ENCODE measurements at regions of chr5 and their contacts with region 1.

Region 1: DNA sequence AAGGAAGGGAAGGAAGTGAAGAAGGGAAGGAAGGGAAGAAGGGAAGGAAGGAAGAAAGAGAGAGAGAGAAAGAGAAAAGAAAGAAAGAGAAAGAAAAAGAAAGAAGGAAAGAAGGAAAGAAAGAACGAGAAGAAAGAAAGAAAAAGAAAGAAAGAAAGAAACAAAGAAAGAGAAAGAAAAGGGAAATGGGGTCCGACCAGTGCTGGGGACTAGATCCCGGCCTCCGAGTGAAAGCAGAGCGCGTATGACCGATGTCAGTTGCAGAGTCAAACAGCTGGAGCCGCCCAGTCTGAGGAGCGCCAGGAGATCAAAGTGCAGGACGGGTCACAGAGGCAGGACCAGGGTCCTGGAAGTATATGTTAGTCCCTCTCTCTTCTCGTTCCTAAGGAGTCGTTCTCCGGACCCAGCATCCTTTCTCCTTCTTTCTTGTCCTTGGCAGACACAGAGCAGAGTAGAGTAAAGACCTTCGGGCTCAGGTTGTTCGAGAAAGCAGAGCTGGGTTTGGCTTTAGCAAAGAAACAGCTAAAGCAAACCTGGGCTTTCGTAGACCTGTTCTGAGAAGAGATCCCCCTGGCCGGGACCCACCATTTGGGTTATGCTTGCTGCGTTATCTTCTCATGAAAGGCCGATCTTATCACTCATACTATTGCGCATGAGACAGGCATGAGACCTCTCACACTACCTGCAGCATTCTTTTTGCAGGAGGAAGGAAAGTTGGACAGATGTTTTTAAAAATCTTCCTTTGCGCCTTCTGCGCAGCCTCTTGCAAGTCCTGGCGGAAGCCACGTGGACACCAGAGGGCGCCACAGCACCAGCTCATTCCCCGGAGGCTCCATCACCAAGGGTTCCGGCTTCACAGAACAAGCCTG is 305.2 kb upstream of the MSX2 start:
- DNase-seq: peak; percentile 89
- ATAC-seq: peak; percentile 99
- H3K4me3 ChIP-seq: peak overlapping the region; percentile 31 to 58
- H3K27ac ChIP-seq: no peak overlapping the region
- H3K4me1 ChIP-seq: peaks cover 8% of the 10 kb centered on the region; the same call in 1 of the 2 replicates
- H3K27me3 ChIP-seq: no peaks in the 10 kb centered on the region
- CTCF ChIP-seq: peak; percentile 93

Region 2: GRCh38 chr5:174327317-174328236 is 91.6 kb before region 1 on chr5:
- CTCF ChIA-PET with region 1: interaction called, 3 read pairs
- POLR2A ChIA-PET with region 1: no interaction called
- in situ Hi-C with region 1: no loop called
- intact Hi-C with region 1: loop called (anchors 2 kb)
- DNase-seq: peak; percentile 30
- ATAC-seq: peak; percentile 91
- H3K4me3 ChIP-seq: no peak overlapping the region
- H3K27ac ChIP-seq: no peak overlapping the region
- H3K4me1 ChIP-seq: no peaks in the 10 kb centered on the region
- H3K27me3 ChIP-seq: peaks cover 24% of the 10 kb centered on the region
- CTCF ChIP-seq: peak; percentile 95

Region 3: GRCh38 chr5:174436781-174437201 is 17.6 kb after region 1 on chr5:
- CTCF ChIA-PET with region 1: no interaction called
- POLR2A ChIA-PET with region 1: no interaction called
- in situ Hi-C with region 1: no loop called
- intact Hi-C with region 1: no loop called
- DNase-seq: no peak
- ATAC-seq: no peak
- H3K4me3 ChIP-seq: no peak overlapping the region
- H3K27ac ChIP-seq: no peak overlapping the region
- H3K4me1 ChIP-seq: no peaks in the 10 kb centered on the region
- H3K27me3 ChIP-seq: no peaks in the 10 kb centered on the region
- CTCF ChIP-seq: no peak

Region 4: GRCh38 chr5:174735498-174736330 is 316.6 kb after region 1 on chr5:
- CTCF ChIA-PET with region 1: interaction called, 5 read pairs
- POLR2A ChIA-PET with region 1: no interaction called
- in situ Hi-C with region 1: no loop called
- intact Hi-C with region 1: loop called (anchors 1 kb)
- DNase-seq: no peak
- ATAC-seq: peak; percentile 93
- H3K4me3 ChIP-seq: peak overlapping the region; percentile 52 to 89
- H3K27ac ChIP-seq: no peak overlapping the region
- H3K4me1 ChIP-seq: peaks cover 20% of the 10 kb centered on the region
- H3K27me3 ChIP-seq: peaks cover 3% of the 10 kb centered on the region; the same call in 1 of the 2 replicates
- CTCF ChIP-seq: peak; percentile 87

Region 5: DNA sequence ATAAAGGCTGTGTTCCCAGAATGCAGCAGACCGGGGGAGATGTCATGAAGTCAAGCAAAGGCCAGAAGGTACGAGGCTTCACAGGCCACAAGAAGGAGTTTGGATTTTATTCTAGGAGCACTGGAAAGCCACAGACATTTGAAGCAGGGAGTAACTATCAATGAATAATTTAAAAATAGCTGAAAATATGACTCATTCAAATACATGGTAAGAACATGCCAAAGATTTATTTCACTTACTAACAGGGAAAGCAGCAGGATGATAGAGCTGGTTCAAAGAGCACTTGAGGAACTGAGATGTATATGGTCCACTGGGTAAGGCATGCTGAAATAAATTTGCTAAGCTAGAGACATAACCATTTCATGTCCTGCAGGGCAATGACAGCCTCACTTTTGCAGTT is 358.4 kb after region 1 on chr5:
- CTCF ChIA-PET with region 1: interaction called, 11 read pairs
- POLR2A ChIA-PET with region 1: no interaction called
- in situ Hi-C with region 1: no loop called
- intact Hi-C with region 1: no loop called
- DNase-seq: no peak
- ATAC-seq: no peak
- H3K4me3 ChIP-seq: no peak overlapping the region
- H3K27ac ChIP-seq: no peak overlapping the region
- H3K4me1 ChIP-seq: no peaks in the 10 kb centered on the region
- H3K27me3 ChIP-seq: peaks cover 19% of the 10 kb centered on the region
- CTCF ChIP-seq: no peak

Region 6: GRCh38 chr5:174793684-174794328 is 374.6 kb after region 1 on chr5:
- CTCF ChIA-PET with region 1: interaction called, 13 read pairs
- POLR2A ChIA-PET with region 1: no interaction called
- in situ Hi-C with region 1: no loop called
- intact Hi-C with region 1: loop called (anchors 1 kb)
- DNase-seq: peak; percentile 17
- ATAC-seq: peak; percentile 96
- H3K4me3 ChIP-seq: peak overlapping the region in 1 of 2 experiments; percentile 35; a peak in 2 of 4 replicates
- H3K27ac ChIP-seq: no peak overlapping the region
- H3K4me1 ChIP-seq: no peaks in the 10 kb centered on the region; the same call in 1 of the 2 replicates
- H3K27me3 ChIP-seq: peaks cover 5% of the 10 kb centered on the region; the same call in 1 of the 2 replicates
- CTCF ChIP-seq: peak; percentile 98

Region 7: GRCh38 chr5:174935854-174936474 is 516.8 kb after region 1 on chr5:
- CTCF ChIA-PET with region 1: no interaction called
- POLR2A ChIA-PET with region 1: no interaction called
- in situ Hi-C with region 1: no loop called
- intact Hi-C with region 1: loop called (anchors 5 kb)
- DNase-seq: peak; percentile 51
- ATAC-seq: peak; percentile 92
- H3K4me3 ChIP-seq: no peak overlapping the region
- H3K27ac ChIP-seq: no peak overlapping the region
- H3K4me1 ChIP-seq: no peaks in the 10 kb centered on the region
- H3K27me3 ChIP-seq: peaks cover 2% of the 10 kb centered on the region; the same call in 1 of the 2 replicates
- CTCF ChIP-seq: peak; percentile 96